A549 (cell line): ENCODE measurements at regions of chr3 and their contacts with region 1.

Region 1: DNA sequence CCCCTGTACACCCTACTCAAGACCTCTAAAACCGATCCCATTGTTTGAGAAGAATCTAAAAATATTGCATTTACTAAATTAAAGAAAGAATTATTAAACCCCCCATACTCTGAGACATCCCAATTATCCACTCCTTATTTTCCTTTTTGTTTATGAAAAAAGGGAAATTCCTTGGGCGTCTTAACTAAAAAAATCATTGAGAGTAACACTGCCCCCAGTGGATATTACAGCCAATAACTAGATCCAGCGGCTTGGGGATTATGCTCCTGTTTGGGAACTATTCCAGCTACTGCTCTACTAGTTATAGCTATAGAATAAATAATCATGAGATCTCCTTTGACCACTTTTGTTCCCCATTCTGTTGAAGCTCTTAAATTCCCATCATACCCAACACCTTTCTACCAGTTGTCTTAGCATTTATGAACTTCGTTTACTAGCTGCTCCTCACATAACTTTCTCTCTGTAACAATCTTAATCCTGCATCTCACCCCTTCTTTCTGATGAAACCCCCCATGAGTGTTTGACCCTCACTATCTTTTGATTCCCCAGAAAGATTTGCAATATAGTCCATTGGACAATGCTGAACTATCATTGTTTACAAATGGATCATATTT is 12.7 kb upstream of the CFAP91 start:
- DNase-seq: peak; percentile 24 to 42
- ATAC-seq: peak; percentile 76 to 82; a peak in 5 of 6 replicates
- H3K4me3 ChIP-seq: no peak overlapping the region
- H3K27ac ChIP-seq: no peak overlapping the region
- H3K4me1 ChIP-seq: no peaks in the 10 kb centered on the region
- CTCF ChIP-seq: peak; percentile 55
- EP300 ChIP-seq: no peak
- POLR2A ChIP-seq: no peak
- RAD21 ChIP-seq: peak in 1 of 2 experiments; percentile 44; a peak in 2 of 5 replicates

Region 2: DNA sequence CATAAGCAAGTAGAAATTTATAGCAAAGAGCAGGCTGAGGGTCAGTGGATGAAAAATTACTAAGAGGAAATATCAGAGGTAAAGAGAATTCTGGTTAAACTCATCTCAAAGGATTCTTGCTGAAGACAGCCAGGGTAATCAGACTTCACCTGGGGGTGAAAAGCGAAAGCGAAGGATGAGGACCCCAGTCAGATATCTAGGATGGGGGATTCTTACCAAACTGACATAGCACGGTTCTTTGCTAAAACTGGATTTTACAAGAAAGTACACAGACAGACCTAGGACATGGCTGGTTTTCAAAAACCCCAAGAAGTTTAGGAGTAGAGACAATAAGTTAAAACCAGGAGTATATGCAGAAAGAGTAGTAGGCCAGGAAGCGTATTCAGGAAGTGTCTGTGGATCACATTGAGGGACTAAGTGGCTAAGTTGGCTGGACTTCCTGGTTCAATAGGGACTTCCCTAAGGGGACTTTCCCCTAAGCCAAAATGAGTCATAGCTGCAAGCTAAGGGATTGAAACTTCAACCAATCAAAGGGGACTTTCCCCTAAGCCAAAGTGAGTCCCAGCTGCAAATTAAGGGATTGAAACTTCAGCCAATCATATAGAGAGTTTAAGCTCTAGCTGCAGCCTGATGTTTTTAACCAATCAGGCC is 10.2 kb after region 1 on chr3:
- CTCF ChIA-PET with region 1: interaction called, 11 read pairs
- POLR2A ChIA-PET with region 1: no interaction called
- DNase-seq: peak in 1 of 2 experiments; percentile 69
- ATAC-seq: no peak
- H3K4me3 ChIP-seq: no peak overlapping the region
- H3K27ac ChIP-seq: no peak overlapping the region
- H3K4me1 ChIP-seq: peaks cover 17% of the 10 kb centered on the region
- CTCF ChIP-seq: no peak
- EP300 ChIP-seq: no peak
- POLR2A ChIP-seq: no peak
- RAD21 ChIP-seq: no peak

Region 3: GRCh38 chr3:119731560-119732343 is 41.6 kb after region 1 on chr3:
- CTCF ChIA-PET with region 1: no interaction called
- POLR2A ChIA-PET with region 1: no interaction called
- DNase-seq: no peak
- ATAC-seq: no peak
- H3K4me3 ChIP-seq: no peak overlapping the region
- H3K27ac ChIP-seq: no peak overlapping the region
- H3K4me1 ChIP-seq: no peaks in the 10 kb centered on the region; the same call in 2 of the 3 replicates
- CTCF ChIP-seq: no peak
- EP300 ChIP-seq: no peak
- POLR2A ChIP-seq: no peak
- RAD21 ChIP-seq: no peak